Psoas muscle (tissue), 8 donors: ENCODE measurements at regions of chr7 and their contacts with region 1.

Region 1: GRCh38 chr7:107563775-107564552 is at the starts of genes COG5 and DUS4L:
- DNase-seq: peak; percentile 82 to 92
- ATAC-seq: peak; percentile 96 to 98 (median 96)
- H3K4me3 ChIP-seq: peak within 1 kb of the TSS; percentile 84
- H3K27ac ChIP-seq: peak within 1 kb of the TSS; percentile 93
- H3K4me1 ChIP-seq: peaks cover 32% of the 10 kb centered on the region
- H3K27me3 ChIP-seq: no peaks in the 10 kb centered on the region
- CTCF ChIP-seq: no peak
- total RNA-seq, gene COG5: 18.8 to 35.1 (median 20.5) TPM
- total RNA-seq, gene DUS4L: 3.3 to 4.9 (median 4.3) TPM

Region 2: GRCh38 chr7:107201795-107202450 is 362.0 kb before region 1 on chr7:
- intact Hi-C with region 1: loop called in 1 of 2 experiments (anchors 5 kb)
- DNase-seq: peak; percentile 40 to 73
- ATAC-seq: peak; percentile 95 to 98 (median 98)
- H3K4me3 ChIP-seq: no peak overlapping the region
- H3K27ac ChIP-seq: peak overlapping the region; percentile 41
- H3K4me1 ChIP-seq: peaks cover 9% of the 10 kb centered on the region
- H3K27me3 ChIP-seq: no peaks in the 10 kb centered on the region
- CTCF ChIP-seq: peak; percentile 70

Region 3: GRCh38 chr7:107579885-107580715 is 16.1 kb after region 1 on chr7 and contains the start of gene BCAP29:
- intact Hi-C with region 1: loop called in 1 of 2 experiments (anchors 2 kb)
- DNase-seq: peak; percentile 83 to 90
- ATAC-seq: peak; percentile 95 to 98 (median 96)
- H3K4me3 ChIP-seq: peak within 1 kb of the TSS; percentile 66
- H3K27ac ChIP-seq: peak within 1 kb of the TSS; percentile 94
- H3K4me1 ChIP-seq: peaks cover 16% of the 10 kb centered on the region
- H3K27me3 ChIP-seq: no peaks in the 10 kb centered on the region
- CTCF ChIP-seq: peak; percentile 43
- total RNA-seq, gene BCAP29: 48.5 to 72.6 (median 58.0) TPM

Region 4: GRCh38 chr7:107890962-107891635 is 327.1 kb after region 1 on chr7 and contains the start of gene DLD:
- intact Hi-C with region 1: loop called in 1 of 2 experiments (anchors 10 kb)
- DNase-seq: peak; percentile 94 to 97
- ATAC-seq: peak; percentile 99 to 100 (median 99)
- H3K4me3 ChIP-seq: peak within 1 kb of the TSS; percentile 82
- H3K27ac ChIP-seq: peak within 1 kb of the TSS; percentile 96
- H3K4me1 ChIP-seq: peaks cover 36% of the 10 kb centered on the region
- H3K27me3 ChIP-seq: no peaks in the 10 kb centered on the region
- CTCF ChIP-seq: no peak
- total RNA-seq, gene DLD: 148 to 219 (median 161) TPM